ENCODE measurements at regions of chr5 and their contacts with region 1.

Region 1: DNA sequence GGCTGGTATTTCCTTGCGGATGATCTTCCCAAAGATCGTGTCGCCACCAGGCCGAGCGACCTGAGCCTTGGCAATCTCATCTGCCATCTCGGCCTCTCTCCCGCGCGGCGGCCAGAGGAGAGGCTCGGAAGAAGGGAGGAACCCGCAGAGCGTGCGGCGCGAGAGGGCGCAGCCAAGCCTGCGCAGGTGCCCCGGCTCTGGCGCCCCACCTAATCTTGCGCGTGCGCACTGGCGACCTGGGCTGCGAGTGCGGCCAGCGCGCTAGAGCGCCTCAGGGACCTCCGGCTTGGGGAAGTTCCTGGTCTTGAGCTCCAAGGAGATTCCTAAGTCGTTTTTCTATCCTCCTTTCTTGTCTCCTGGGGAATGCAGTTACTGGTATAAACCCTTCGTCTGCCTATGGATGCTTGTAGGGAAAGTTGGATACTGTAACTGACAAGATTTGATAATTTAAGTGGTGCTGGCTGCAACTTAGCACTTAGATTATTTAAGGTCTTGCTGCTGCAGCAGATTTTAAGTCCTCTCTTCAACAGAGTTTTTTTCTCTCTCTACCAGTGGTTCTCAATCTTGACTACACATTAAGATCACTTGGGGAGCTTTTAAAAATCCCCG is at the start of gene HINT1:
- DNase-seq: peak; percentile 77 to 96 (median 88)
- ATAC-seq: peak; percentile 84 to 89 (median 86)
- H3K4me3 ChIP-seq: peak within 1 kb of the TSS; percentile 81 to 89
- H3K4me3 Mint-ChIP-seq: peak within 1 kb of the TSS; percentile 91 to 98 (median 94)
- H3K27ac ChIP-seq: peak within 1 kb of the TSS; percentile 93
- H3K27ac Mint-ChIP-seq: peak within 1 kb of the TSS; percentile 98
- H3K4me1 ChIP-seq: peaks cover 5 to 27% of the 10 kb centered on the region in 2 experiments
- H3K4me1 Mint-ChIP-seq: peaks cover 45 to 61% (median 48%) of the 10 kb centered on the region in 3 donors
- H3K27me3 ChIP-seq: no peaks in the 10 kb centered on the region
- H3K27me3 Mint-ChIP-seq: no peaks in the 10 kb centered on the region
- total RNA-seq, gene HINT1: 204 to 240 (median 238) TPM

Region 2: GRCh38 chr5:131252824-131253171 is 87.6 kb after region 1 on chr5:
- CTCF ChIA-PET with region 1: interaction called in 1 of 2 experiments, 5 read pairs
- POLR2A ChIA-PET with region 1: interaction called in 1 of 2 experiments, 18 read pairs
- DNase-seq: peak; percentile 56 to 93 (median 81)
- ATAC-seq: peak; percentile 83 to 90 (median 86)
- H3K4me3 ChIP-seq: peak overlapping the region; percentile 63 to 68
- H3K4me3 Mint-ChIP-seq: peak overlapping the region; percentile 75 to 96 (median 91)
- H3K27ac ChIP-seq: peak overlapping the region; percentile 98
- H3K27ac Mint-ChIP-seq: peak overlapping the region; percentile 98 to 99
- H3K4me1 ChIP-seq: peaks cover 48 to 55% of the 10 kb centered on the region in 2 experiments
- H3K4me1 Mint-ChIP-seq: peaks cover 71 to 76% (median 73%) of the 10 kb centered on the region in 3 donors
- H3K27me3 ChIP-seq: no peaks in the 10 kb centered on the region
- H3K27me3 Mint-ChIP-seq: no peaks in the 10 kb centered on the region

Region 3: DNA sequence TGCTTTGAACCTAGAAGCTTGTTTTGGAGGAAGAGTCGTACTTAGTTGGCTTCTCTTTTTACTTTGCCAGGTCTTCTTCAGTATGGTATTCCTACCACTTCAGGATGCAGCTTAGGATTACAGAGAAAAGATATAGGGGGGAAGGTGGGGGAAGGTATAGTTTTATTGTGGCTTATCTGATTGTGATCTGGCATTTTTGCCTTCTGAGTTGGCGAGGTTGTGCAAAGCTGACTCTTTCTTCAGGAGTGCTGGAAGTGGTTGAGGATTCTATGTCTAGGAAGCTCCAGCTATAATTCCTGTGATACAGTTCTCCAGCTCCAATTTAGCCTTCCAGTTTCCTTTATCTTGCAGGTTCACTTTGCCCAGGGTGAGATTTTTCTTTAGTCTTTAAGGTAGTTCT is 105.6 kb after region 1 on chr5:
- CTCF ChIA-PET with region 1: interaction called in 1 of 2 experiments, 5 read pairs
- POLR2A ChIA-PET with region 1: interaction called in 1 of 2 experiments, 30 read pairs
- DNase-seq: no peak
- ATAC-seq: no peak
- H3K4me3 ChIP-seq: peak overlapping the region in 1 of 2 donors; percentile 21
- H3K4me3 Mint-ChIP-seq: peak overlapping the region; percentile 83 to 92 (median 85)
- H3K27ac ChIP-seq: peak overlapping the region; percentile 83
- H3K27ac Mint-ChIP-seq: peak overlapping the region; percentile 90 to 94
- H3K4me1 ChIP-seq: peaks cover 62 to 63% of the 10 kb centered on the region in 2 experiments
- H3K4me1 Mint-ChIP-seq: peaks cover 73 to 77% (median 75%) of the 10 kb centered on the region in 3 donors
- H3K27me3 ChIP-seq: no peaks in the 10 kb centered on the region
- H3K27me3 Mint-ChIP-seq: no peaks in the 10 kb centered on the region

Measured in T-cell (primary cell).